GM18951 (cell line): ENCODE measurements at regions of chr9 and their contacts with region 1.

Region 1: GRCh38 chr9:26744191-26744965 is 148.2 kb downstream of the CAAP1 start:
- POLR2A ChIP-seq: no peak

Region 2: GRCh38 chr9:26426551-26427131 is 317.7 kb before region 1 on chr9:
- in situ Hi-C with region 1: no loop called
- POLR2A ChIP-seq: no peak

Region 3: GRCh38 chr9:26975693-26976059 is 231.3 kb after region 1 on chr9:
- in situ Hi-C with region 1: loop called (anchors 25 kb)
- POLR2A ChIP-seq: no peak